ENCODE measurements at regions of chr2 and their contacts with region 1.

Region 1: GRCh38 chr2:68909793-68910674 is 38.8 kb upstream of the BMP10 start:
- DNase-seq: no peak

Region 2: GRCh38 chr2:68709421-68709911 is 200.6 kb before region 1 on chr2:
- intact Hi-C with region 1: loop called (anchors 5 kb)
- DNase-seq: no peak

Region 3: GRCh38 chr2:68715353-68716041 is 194.5 kb before region 1 on chr2:
- intact Hi-C with region 1: loop called (anchors 5 kb)
- DNase-seq: peak; percentile 81

Region 4: GRCh38 chr2:68751397-68752339 is 158.4 kb before region 1 on chr2:
- intact Hi-C with region 1: loop called (anchors 2 kb)
- DNase-seq: peak; percentile 96

Region 5: DNA sequence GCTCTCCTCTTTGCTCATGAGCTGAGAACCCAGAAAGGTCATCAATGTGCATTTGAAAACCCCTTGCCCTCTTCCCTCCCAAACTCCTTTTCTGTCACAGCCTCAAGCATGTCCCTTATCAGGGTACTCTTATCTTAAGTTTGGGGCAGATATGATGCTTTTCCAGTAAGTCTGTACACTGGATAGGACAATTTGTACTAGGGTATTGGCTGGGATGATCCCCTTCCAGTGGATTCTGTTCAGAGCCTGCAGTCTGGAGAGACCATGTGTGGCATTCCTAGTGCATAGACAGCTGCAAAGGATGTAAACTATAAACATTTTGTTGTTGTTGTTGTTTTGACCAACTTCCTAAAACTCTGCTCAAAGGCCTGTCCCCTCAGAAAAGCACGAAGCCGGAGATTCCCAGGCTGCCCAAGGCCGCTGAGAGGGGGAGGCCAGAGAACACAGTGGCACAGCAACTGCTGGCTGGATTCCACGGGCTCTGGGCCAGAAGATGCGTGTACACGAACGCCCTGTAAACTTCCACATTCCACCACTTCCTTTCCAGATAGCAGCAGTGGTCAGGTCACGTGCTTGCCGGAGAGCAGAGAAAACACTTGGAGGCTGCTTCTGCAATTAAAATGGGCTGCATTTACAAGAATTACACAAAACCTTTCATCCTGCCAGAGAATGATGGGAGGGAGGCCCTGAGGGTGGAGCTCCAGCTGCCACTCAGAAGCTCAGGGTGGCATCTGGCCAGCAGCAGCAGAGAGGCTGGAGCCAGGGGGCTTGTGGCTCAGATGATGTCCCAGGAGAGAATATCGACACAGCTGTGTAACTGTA is 80.9 kb before region 1 on chr2:
- intact Hi-C with region 1: loop called (anchors 2 kb)
- DNase-seq: peak; percentile 97

Measured in cardiac septum (tissue), 1 donor.